AG04450 (cell line): ENCODE measurements at regions of chr1 and their contacts with region 1.

Region 1: GRCh38 chr1:110209715-110210603 is at the start of gene KCNC4:
- DNase-seq: no peak
- H3K4me3 ChIP-seq: peak within 1 kb of the TSS; percentile 60
- H3K27ac ChIP-seq: no peak within 1 kb of the TSS
- H3K27me3 ChIP-seq: peaks cover 28% of the 10 kb centered on the region
- CTCF ChIP-seq: no peak
- polyA plus RNA-seq, gene KCNC4: 0.36 and 0.63 TPM in 2 replicates

Region 2: DNA sequence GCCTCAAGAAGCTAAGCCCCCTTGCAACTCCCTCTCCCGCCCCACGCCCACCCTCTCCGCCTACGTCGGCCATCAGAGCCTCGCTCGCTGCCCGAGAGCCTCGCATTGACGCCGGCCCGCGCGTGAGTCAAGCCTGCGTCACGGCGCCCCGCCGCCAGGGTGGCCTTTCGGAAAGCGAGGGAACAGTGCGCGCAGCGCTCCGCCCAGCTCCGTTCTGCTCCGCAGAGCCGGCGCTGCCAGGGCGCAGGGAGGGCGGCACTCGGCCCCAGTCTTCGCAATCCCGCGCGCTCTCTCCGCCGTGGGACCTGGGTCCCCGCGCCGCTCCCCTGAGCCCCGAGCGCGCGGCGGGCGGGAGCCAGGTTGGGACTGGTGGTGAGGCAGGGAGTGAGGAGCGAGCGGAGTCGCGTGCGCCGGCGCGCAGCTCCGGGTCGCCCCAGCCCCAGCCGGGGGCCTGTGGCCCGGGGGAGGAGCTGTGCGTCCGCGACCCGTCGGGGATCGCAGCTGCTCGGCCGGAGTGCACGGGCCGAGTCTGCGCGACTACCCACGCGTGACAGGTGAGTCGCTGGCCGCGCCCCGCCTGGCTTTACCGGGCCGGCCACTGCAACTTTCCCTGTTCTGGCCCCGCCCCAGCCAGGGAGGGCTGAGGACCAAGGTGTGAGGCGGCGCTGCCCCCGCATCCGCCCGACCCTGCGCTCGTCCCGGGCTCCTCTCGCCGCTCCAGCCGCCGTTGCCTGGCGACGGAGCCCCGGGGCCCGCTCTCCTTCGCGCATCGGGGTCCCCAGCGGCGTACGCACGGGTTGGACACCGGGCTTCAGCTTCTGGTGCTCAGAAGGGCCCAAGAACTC is 59.4 kb before region 1 on chr1 and contains the start of gene SLC6A17:
- CTCF ChIA-PET with region 1: no interaction called
- POLR2A ChIA-PET with region 1: no interaction called
- DNase-seq: no peak
- H3K4me3 ChIP-seq: peak within 1 kb of the TSS; percentile 39; the same call in 1 of the 2 replicates
- H3K27ac ChIP-seq: no peak within 1 kb of the TSS
- H3K27me3 ChIP-seq: peaks cover 19% of the 10 kb centered on the region
- CTCF ChIP-seq: 0 out of 2 replicates have a peak, but pooled peaks have one; percentile 5
- polyA plus RNA-seq, gene SLC6A17: 0.02 and 0.05 TPM in 2 replicates

Region 3: GRCh38 chr1:110190282-110190929 is 19.6 kb before region 1 on chr1:
- CTCF ChIA-PET with region 1: interaction called, 12 read pairs
- POLR2A ChIA-PET with region 1: no interaction called
- DNase-seq: no peak
- H3K4me3 ChIP-seq: no peak overlapping the region
- H3K27ac ChIP-seq: no peak overlapping the region
- H3K27me3 ChIP-seq: peaks cover 7% of the 10 kb centered on the region
- CTCF ChIP-seq: no peak

Region 4: GRCh38 chr1:110292031-110292741 is 82.2 kb after region 1 on chr1:
- CTCF ChIA-PET with region 1: interaction called, 25 read pairs
- POLR2A ChIA-PET with region 1: no interaction called
- DNase-seq: no peak
- H3K4me3 ChIP-seq: no peak overlapping the region
- H3K27ac ChIP-seq: no peak overlapping the region
- H3K27me3 ChIP-seq: no peaks in the 10 kb centered on the region
- CTCF ChIP-seq: no peak

Region 5: GRCh38 chr1:110328274-110328673 is 118.3 kb after region 1 on chr1:
- CTCF ChIA-PET with region 1: interaction called, 86 read pairs
- POLR2A ChIA-PET with region 1: no interaction called
- DNase-seq: no peak
- H3K4me3 ChIP-seq: no peak overlapping the region
- H3K27ac ChIP-seq: no peak overlapping the region
- H3K27me3 ChIP-seq: peaks cover 3% of the 10 kb centered on the region
- CTCF ChIP-seq: no peak

Region 6: DNA sequence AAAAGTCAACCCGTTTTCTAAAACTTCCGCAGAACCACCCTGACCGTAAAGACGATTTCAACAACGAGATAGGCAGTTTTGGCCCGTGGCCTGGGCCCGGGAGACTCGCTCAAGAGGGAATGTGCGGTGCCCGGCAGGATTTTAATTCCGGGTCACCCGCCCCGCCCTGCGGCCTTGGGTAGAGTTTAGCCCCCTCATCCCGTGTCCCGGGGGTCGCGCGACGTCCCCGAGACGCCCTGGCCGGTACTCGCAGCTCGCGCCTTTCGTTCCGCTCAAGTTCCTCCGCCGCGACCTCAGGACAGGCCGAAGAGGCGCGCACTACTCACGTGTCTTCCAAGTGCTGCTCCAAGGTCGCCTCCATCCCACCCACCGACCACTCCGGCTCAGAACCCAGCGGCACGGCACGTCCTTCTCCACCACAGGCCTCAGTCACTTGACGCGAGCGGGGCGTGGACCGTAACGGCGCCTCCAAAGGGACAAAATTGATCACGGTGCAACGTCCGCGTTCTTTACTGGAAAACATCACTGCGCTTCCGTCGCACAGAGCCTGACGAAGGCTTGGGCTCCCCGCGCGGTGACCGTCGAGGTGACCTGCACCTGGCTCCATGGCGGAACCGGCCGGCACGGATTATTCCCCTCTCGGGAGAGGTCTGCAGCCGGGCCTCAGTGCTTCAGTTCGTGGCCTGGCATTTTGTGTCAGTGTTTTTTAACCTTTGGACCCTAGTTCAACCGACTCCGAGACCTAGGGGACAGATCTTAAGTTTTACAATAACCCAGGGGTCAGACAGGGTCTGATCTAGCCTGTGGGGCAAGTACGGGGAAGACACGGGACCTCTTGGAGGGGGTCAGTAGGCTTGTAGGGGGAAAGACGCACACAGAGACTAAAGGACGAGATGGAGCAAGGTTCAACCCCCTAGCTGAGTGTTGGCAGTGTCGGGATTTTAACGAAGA is 197.6 kb after region 1 on chr1 and contains the start of gene LAMTOR5:
- CTCF ChIA-PET with region 1: interaction called, 84 read pairs
- POLR2A ChIA-PET with region 1: no interaction called
- DNase-seq: peak; percentile 65
- H3K4me3 ChIP-seq: peak within 1 kb of the TSS; percentile 98
- H3K27ac ChIP-seq: peak within 1 kb of the TSS; percentile 93
- H3K27me3 ChIP-seq: no peaks in the 10 kb centered on the region
- CTCF ChIP-seq: no peak
- polyA plus RNA-seq, gene LAMTOR5: 288 and 300 TPM in 2 replicates